PC-9 (cell line): ENCODE measurements at regions of chr11 and their contacts with region 1.

Region 1: GRCh38 chr11:94623120-94623735 is 56.1 kb downstream of the PIWIL4 start:
- DNase-seq: peak; percentile 67 to 87
- H3K4me3 ChIP-seq: no peak overlapping the region
- H3K27ac ChIP-seq: 0 out of 2 replicates have a peak overlapping the region, but pooled peaks have one; percentile 12
- H3K4me1 ChIP-seq: peaks cover 5% of the 10 kb centered on the region; the same call in 1 of the 2 replicates
- H3K27me3 ChIP-seq: no peaks in the 10 kb centered on the region
- CTCF ChIP-seq: peak; percentile 99

Region 2: GRCh38 chr11:94678236-94678635 is 55.0 kb after region 1 on chr11:
- CTCF ChIA-PET with region 1: interaction called, 10 read pairs
- POLR2A ChIA-PET with region 1: no interaction called
- intact Hi-C with region 1: no loop called
- DNase-seq: peak; percentile 35 to 98
- H3K4me3 ChIP-seq: peak overlapping the region; percentile 36
- H3K27ac ChIP-seq: peak overlapping the region; percentile 76
- H3K4me1 ChIP-seq: peaks cover 48% of the 10 kb centered on the region
- H3K27me3 ChIP-seq: no peaks in the 10 kb centered on the region
- CTCF ChIP-seq: no peak

Region 3: GRCh38 chr11:94762208-94762607 is 139.0 kb after region 1 on chr11:
- CTCF ChIA-PET with region 1: interaction called, 15 read pairs
- POLR2A ChIA-PET with region 1: no interaction called
- intact Hi-C with region 1: loop called (anchors 1 kb)
- DNase-seq: peak; percentile 28 to 67
- H3K4me3 ChIP-seq: no peak overlapping the region
- H3K27ac ChIP-seq: no peak overlapping the region
- H3K4me1 ChIP-seq: peaks cover 32% of the 10 kb centered on the region
- H3K27me3 ChIP-seq: no peaks in the 10 kb centered on the region
- CTCF ChIP-seq: peak; percentile 73

Region 4: DNA sequence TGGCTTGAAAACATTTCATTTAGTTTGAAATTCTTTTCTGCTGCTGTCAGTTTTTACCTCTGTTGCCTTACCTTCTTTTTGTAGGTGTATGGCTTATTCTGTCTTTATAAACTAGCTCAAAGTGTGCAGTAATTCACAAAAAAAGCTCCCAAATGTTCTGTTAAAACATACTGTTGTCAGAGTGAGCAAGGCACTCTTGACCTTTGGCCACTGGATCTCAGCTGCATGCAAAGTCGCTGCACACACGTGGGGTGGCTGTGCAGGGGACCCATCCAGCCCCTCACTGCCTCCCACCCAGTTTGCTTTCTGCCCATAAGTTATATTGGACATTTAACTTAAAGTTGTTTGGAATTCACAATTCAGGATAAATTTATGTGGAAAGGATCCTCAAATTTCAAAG is 237.1 kb after region 1 on chr11:
- CTCF ChIA-PET with region 1: no interaction called
- POLR2A ChIA-PET with region 1: interaction called, 21 read pairs
- intact Hi-C with region 1: no loop called
- DNase-seq: no peak
- H3K4me3 ChIP-seq: no peak overlapping the region
- H3K27ac ChIP-seq: no peak overlapping the region
- H3K4me1 ChIP-seq: no peaks in the 10 kb centered on the region
- H3K27me3 ChIP-seq: no peaks in the 10 kb centered on the region
- CTCF ChIP-seq: no peak

Region 5: DNA sequence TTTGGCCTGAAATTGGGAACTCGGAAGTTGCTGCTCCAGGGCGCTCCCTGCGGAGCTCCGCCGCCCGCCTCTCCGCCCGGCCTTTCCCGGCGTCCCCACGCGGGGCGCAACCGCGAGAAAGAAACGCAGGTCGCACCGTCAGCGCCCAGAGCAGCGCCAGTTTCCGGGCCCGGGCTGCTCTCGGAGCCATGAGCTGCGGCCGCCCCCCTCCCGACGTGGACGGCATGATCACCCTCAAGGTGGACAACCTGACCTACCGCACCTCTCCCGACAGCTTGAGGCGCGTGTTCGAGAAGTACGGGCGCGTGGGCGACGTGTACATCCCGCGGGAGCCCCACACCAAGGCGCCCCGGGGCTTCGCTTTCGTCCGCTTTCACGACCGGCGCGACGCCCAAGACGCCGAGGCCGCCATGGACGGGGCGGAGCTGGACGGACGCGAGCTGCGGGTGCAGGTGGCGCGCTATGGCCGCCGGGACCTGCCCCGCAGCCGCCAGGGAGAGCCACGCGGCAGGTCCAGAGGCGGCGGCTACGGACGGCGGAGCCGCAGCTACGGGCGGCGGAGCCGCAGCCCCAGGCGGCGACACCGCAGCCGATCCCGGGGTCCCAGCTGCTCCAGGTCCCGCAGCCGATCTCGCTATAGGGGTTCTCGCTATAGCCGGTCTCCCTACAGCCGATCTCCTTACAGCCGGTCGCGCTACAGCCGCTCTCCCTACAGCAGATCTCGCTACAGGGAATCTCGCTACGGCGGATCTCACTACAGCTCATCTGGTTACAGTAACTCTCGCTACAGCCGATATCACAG is 444.0 kb after region 1 on chr11:
- CTCF ChIA-PET with region 1: no interaction called
- POLR2A ChIA-PET with region 1: no interaction called
- intact Hi-C with region 1: loop called (anchors 5 kb)
- DNase-seq: peak; percentile 68 to 72
- H3K4me3 ChIP-seq: peak overlapping the region; percentile 89
- H3K27ac ChIP-seq: peak overlapping the region; percentile 85
- H3K4me1 ChIP-seq: peaks cover 20% of the 10 kb centered on the region
- H3K27me3 ChIP-seq: no peaks in the 10 kb centered on the region
- CTCF ChIP-seq: peak; percentile 53